ENCODE measurements at regions of chr1 and their contacts with region 1.

Region 1: DNA sequence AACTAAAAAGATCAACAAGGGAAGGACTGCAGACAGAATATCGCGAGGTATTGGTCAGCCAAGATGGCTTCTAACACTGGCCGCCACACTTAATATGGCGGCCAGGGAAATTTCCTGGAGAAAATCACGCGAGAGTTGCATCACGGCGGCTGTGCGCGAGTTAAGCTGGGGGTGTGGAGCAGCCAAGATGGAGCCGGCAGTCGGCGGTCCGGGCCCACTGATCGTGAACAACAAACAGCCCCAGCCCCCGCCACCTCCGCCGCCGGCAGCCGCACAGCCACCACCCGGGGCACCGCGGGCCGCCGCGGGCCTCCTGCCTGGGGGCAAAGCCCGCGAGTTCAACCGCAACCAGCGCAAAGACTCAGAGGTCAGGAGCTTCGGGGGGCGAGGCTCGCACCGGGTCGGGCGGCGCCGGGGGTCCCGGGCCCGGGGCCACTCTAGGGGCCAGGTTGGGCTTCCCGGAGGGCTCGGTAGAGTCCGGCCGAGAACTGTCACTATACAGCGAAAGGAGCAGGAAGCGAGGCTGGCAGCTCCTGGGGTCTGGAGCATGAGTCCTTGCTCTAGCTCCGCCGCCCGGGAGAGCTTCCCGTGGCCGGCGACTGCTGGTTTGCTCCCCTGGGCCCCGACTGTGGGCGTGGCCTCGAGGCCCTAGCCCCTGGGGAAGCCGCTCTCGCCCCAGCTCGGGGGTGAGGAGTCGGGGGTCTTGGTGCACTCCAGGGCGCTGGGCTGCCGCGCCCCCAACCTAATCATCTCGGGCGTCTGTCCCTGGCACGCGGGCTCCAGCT is at the start of gene STRIP1:
- DNase-seq: peak; percentile 81
- ATAC-seq: peak; percentile 92
- H3K4me3 Mint-ChIP-seq: peak within 1 kb of the TSS; percentile 93
- H3K27ac Mint-ChIP-seq: peak within 1 kb of the TSS; percentile 90
- H3K4me1 Mint-ChIP-seq: peaks cover 41% of the 10 kb centered on the region
- H3K27me3 Mint-ChIP-seq: no peaks in the 10 kb centered on the region
- CTCF ChIP-seq: no peak
- total RNA-seq, gene STRIP1: 60.4 and 77.3 TPM in 2 replicates

Region 2: GRCh38 chr1:109426278-109427170 is 608.1 kb before region 1 on chr1 and contains the start of gene PSMA5:
- CTCF ChIA-PET with region 1: no interaction called
- POLR2A ChIA-PET with region 1: interaction called, 6 read pairs
- intact Hi-C with region 1: loop called (anchors 1 kb)
- DNase-seq: peak; percentile 81
- ATAC-seq: peak; percentile 97
- H3K4me3 Mint-ChIP-seq: peak within 1 kb of the TSS; percentile 96
- H3K27ac Mint-ChIP-seq: peak within 1 kb of the TSS; percentile 97
- H3K4me1 Mint-ChIP-seq: peaks cover 37% of the 10 kb centered on the region
- H3K27me3 Mint-ChIP-seq: no peaks in the 10 kb centered on the region
- CTCF ChIP-seq: no peak
- total RNA-seq, gene PSMA5: 105 and 125 TPM in 2 replicates

Region 3: DNA sequence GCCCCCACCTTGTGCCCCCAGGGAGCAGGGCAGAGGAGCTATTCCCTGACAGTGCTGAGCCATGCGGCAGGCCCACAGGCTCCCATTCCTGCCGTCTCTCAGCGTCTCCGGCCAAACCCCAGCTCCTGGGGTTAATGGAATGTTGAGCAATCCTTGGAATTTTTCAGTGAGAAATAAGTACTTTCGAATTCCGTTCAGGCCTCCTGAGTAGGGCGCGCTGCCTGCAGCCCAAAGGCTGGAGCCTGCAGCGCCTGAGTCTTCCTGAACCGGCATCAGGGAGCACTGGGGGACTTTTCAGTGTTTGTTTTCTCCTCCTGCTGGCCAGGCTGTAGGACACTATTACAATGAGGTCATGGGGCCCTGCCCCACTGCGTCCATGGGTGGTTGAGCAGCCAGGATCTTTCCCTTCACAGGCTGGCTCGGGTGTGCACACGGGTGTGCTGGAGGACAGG is 157.3 kb before region 1 on chr1:
- CTCF ChIA-PET with region 1: no interaction called
- POLR2A ChIA-PET with region 1: no interaction called
- intact Hi-C with region 1: no loop called
- DNase-seq: no peak
- ATAC-seq: peak; percentile 48
- H3K4me3 Mint-ChIP-seq: peak overlapping the region; percentile 46
- H3K27ac Mint-ChIP-seq: no peak overlapping the region
- H3K4me1 Mint-ChIP-seq: peaks cover 22% of the 10 kb centered on the region
- H3K27me3 Mint-ChIP-seq: peaks cover 19% of the 10 kb centered on the region
- CTCF ChIP-seq: no peak

Region 4: GRCh38 chr1:109984456-109985275 is 50.0 kb before region 1 on chr1 and contains the start of gene AHCYL1:
- CTCF ChIA-PET with region 1: interaction called, 7 read pairs
- POLR2A ChIA-PET with region 1: interaction called, 24 read pairs
- intact Hi-C with region 1: loop called (anchors 1 kb)
- DNase-seq: peak; percentile 97
- ATAC-seq: peak; percentile 99
- H3K4me3 Mint-ChIP-seq: peak within 1 kb of the TSS; percentile 98
- H3K27ac Mint-ChIP-seq: peak within 1 kb of the TSS; percentile 93
- H3K4me1 Mint-ChIP-seq: peaks cover 37% of the 10 kb centered on the region
- H3K27me3 Mint-ChIP-seq: peaks cover 5% of the 10 kb centered on the region
- CTCF ChIP-seq: peak; percentile 56
- total RNA-seq, gene AHCYL1: 40.5 and 41.6 TPM in 2 replicates

Region 5: DNA sequence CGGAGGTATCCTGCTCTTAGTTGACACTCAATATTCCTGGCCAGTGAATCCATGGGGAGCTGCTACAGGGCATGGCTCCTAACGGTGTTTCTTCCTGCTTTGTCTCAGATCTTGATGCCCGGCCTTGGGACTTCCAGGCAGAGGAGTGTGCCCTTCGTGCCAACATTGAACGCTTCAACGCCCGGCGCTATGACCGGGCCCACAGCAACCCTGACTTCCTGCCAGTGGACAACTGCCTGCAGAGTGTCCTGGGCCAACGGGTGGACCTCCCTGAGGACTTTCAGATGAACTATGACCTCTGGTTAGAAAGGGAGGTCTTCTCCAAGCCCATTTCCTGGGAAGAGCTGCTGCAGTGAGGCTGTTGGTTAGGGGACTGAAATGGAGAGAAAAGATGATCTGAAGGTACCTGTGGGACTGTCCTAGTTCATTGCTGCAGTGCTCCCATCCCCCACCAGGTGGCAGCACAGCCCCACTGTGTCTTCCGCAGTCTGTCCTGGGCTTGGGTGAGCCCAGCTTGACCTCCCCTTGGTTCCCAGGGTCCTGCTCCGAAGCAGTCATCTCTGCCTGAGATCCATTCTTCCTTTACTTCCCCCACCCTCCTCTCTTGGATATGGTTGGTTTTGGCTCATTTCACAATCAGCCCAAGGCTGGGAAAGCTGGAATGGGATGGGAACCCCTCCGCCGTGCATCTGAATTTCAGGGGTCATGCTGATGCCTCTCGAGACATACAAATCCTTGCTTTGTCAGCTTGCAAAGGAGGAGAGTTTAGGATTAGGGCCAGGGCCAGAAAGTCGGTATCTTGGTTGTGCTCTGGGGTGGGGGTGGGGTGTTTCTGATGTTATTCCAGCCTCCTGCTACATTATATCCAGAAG is 19.1 kb after region 1 on chr1:
- CTCF ChIA-PET with region 1: interaction called, 12 read pairs
- POLR2A ChIA-PET with region 1: interaction called, 7 read pairs
- intact Hi-C with region 1: no loop called
- DNase-seq: peak; percentile 68
- ATAC-seq: peak; percentile 85
- H3K4me3 Mint-ChIP-seq: no peak overlapping the region
- H3K27ac Mint-ChIP-seq: no peak overlapping the region
- H3K4me1 Mint-ChIP-seq: no peaks in the 10 kb centered on the region
- H3K27me3 Mint-ChIP-seq: no peaks in the 10 kb centered on the region
- CTCF ChIP-seq: peak; percentile 50

Region 6: GRCh38 chr1:110112656-110113055 is 78.0 kb after region 1 on chr1:
- CTCF ChIA-PET with region 1: no interaction called
- POLR2A ChIA-PET with region 1: no interaction called
- intact Hi-C with region 1: no loop called
- DNase-seq: no peak
- ATAC-seq: no peak
- H3K4me3 Mint-ChIP-seq: no peak overlapping the region
- H3K27ac Mint-ChIP-seq: no peak overlapping the region
- H3K4me1 Mint-ChIP-seq: no peaks in the 10 kb centered on the region
- H3K27me3 Mint-ChIP-seq: peaks cover 38% of the 10 kb centered on the region
- CTCF ChIP-seq: no peak

Region 7: GRCh38 chr1:110460253-110461220 is 425.9 kb after region 1 on chr1:
- CTCF ChIA-PET with region 1: interaction called, 6 read pairs
- POLR2A ChIA-PET with region 1: no interaction called
- intact Hi-C with region 1: loop called (anchors 1 kb)
- DNase-seq: peak; percentile 68
- ATAC-seq: peak; percentile 99
- H3K4me3 Mint-ChIP-seq: no peak overlapping the region
- H3K27ac Mint-ChIP-seq: no peak overlapping the region
- H3K4me1 Mint-ChIP-seq: no peaks in the 10 kb centered on the region
- H3K27me3 Mint-ChIP-seq: no peaks in the 10 kb centered on the region
- CTCF ChIP-seq: peak; percentile 96

Region 8: DNA sequence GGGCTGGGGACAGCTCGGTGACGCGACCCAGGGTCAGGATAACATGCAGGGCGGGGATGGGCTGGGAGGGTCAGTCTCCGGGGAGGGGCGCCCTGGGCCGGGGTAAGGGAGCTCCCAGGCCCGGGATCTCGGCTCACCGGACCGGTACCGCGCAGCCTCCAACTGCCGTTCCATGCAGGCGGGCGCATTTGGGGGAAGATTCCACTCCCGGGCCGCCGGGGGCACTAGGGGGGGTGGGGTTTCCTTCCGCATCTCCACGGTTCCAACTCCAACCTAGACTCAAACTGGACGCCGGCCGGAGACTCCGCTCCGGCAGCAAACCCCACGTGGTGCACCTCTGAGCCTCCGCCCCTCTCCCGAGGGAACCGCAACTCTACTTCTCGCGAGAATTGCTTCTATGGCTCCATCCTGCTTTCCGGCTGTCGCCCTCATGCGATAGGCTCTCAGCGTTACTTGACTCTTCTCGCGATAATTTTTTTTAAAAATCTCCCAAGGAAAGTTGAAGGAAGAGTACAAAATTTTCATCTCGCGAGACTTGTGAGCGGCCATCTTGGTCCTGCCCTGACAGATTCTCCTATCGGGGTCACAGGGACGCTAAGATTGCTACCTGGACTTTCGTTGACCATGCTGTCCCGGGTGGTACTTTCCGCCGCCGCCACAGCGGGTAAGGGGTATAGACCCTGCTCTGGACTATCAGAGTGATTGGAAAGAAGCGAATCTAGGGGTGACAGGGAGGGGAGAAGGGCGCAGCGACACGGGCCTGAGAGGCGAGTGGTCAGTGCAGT is 1414.5 kb after region 1 on chr1 and contains the starts of genes ATP5PB and WDR77:
- CTCF ChIA-PET with region 1: no interaction called
- POLR2A ChIA-PET with region 1: no interaction called
- intact Hi-C with region 1: loop called (anchors 10 kb)
- DNase-seq: peak; percentile 77
- ATAC-seq: peak; percentile 96
- H3K4me3 Mint-ChIP-seq: peak within 1 kb of the TSS; percentile 100
- H3K27ac Mint-ChIP-seq: peak within 1 kb of the TSS; percentile 98
- H3K4me1 Mint-ChIP-seq: peaks cover 71% of the 10 kb centered on the region
- H3K27me3 Mint-ChIP-seq: no peaks in the 10 kb centered on the region
- CTCF ChIP-seq: no peak
- total RNA-seq, gene ATP5PB: 220 and 229 TPM in 2 replicates
- total RNA-seq, gene WDR77: 55.8 and 63.3 TPM in 2 replicates